Pancreas (tissue), 10 donors: ENCODE measurements at regions of chr12 and their contacts with region 1.

Region 1: DNA sequence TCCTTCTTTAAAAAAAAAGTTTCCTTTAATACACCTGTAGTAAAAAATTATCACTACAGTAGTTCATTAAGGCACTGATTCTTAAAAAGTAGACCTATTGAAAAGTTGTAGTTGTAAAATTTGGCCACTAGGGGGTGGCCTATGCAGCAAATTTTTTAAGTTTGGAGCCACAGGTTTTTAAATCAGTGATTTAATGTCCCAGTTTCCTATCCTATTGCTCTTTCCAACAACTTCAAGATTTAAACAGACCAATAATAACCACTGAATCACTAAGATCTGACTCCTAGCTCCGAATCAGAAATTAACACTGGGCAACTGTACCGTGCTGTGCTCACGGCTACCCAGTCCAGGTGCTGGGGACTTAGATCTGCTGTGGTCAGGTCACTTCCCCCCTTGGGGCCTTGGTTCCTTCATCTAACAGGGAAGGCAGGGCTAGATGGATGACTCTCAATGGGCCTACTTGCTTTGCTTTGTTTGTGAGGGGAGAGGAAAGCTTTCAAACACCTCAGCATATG is 279.3 kb downstream of the MED13L start:
- DNase-seq: peak in 1 of 6 donors; percentile 26
- ATAC-seq: peak; percentile 52 to 84 (median 74)
- H3K4me3 ChIP-seq: no peak overlapping the region
- H3K27ac ChIP-seq: no peak overlapping the region
- H3K4me1 ChIP-seq: peaks cover 5 to 9% (median 6%) of the 10 kb centered on the region in 3 donors
- H3K27me3 ChIP-seq: no peaks in the 10 kb centered on the region
- CTCF ChIP-seq: peak; percentile 69 to 88 (median 82)

Region 2: GRCh38 chr12:115794659-115795081 is 203.5 kb before region 1 on chr12:
- intact Hi-C with region 1: no loop called
- DNase-seq: no peak
- ATAC-seq: no peak
- H3K4me3 ChIP-seq: no peak overlapping the region
- H3K27ac ChIP-seq: no peak overlapping the region
- H3K4me1 ChIP-seq: no peaks in the 10 kb centered on the region
- H3K27me3 ChIP-seq: no peaks in the 10 kb centered on the region
- CTCF ChIP-seq: no peak

Region 3: DNA sequence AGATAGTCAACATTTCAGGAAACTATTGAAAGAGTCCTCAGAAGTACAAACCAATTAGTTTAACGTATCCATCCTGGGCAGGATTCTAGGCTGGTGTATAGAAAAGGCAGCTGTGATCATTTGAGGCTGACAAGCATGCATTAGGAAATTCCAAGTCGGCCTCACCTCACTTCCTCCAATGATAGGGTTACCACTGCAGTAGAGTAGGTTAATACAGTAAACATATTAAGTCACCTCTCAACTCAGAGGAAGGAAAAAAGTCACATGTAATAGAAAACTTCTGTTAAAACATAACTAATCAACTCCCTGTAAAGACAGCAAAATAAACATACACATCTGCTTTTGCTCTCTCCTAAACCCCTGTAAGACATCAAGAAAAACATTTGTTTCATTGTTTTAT is 245.8 kb after region 1 on chr12:
- intact Hi-C with region 1: loop called in 1 of 3 experiments (anchors 10 kb)
- DNase-seq: no peak
- ATAC-seq: peak; percentile 79 to 90 (median 86)
- H3K4me3 ChIP-seq: no peak overlapping the region
- H3K27ac ChIP-seq: peak overlapping the region in 3 of 4 donors; percentile 40 to 76 (median 64)
- H3K4me1 ChIP-seq: peaks cover 5 to 58% (median 50%) of the 10 kb centered on the region in 3 donors
- H3K27me3 ChIP-seq: no peaks in the 10 kb centered on the region
- CTCF ChIP-seq: no peak

Region 4: GRCh38 chr12:116717466-116718437 is 719.6 kb after region 1 on chr12:
- intact Hi-C with region 1: loop called in 1 of 3 experiments (anchors 10 kb)
- DNase-seq: peak in 1 of 6 donors; percentile 32
- ATAC-seq: peak in 3 of 4 donors; percentile 10 to 38 (median 17)
- H3K4me3 ChIP-seq: no peak overlapping the region
- H3K27ac ChIP-seq: no peak overlapping the region
- H3K4me1 ChIP-seq: no peaks in the 10 kb centered on the region
- H3K27me3 ChIP-seq: no peaks in the 10 kb centered on the region
- CTCF ChIP-seq: no peak